ENCODE measurements at regions of chr12 and their contacts with region 1.

Region 1: DNA sequence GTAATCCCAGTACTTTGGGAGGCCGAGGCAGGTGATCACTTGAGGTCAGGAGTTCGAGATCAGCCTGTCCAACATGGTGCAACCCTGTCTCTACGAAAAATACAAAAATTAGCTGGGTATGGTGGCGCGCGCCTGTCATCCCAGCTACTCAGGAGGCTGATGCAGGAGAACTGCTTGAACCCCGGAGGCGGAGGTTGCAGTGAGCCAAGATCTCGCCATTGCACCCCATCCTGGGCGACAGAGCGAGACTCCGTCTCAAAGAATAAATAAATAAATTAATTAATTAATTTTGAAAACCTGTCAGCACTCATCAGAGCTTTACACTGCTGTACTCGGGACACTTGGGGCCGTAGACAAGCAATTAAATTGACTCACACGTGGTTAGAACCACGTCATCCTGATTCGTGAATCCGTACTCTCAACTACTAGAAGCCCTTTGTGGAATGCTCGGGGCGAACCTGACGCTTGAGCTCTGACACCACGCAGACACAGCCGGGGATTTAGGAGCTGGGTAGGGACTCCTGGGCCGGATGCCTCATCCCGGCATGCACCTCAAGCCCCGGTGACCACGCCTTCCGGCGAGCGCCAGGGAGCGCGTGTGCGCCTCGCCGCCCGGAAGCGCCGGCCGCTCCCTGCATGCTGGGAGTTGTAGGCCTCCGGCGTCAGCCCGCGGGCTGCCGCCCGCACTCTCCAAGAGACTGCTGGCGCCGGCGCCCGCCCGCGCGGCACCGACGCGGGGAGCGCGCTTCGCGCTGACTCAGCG is at the start of gene XPOT:
- DNase-seq: peak; percentile 91 to 95 (median 94)
- H3K4me3 ChIP-seq: peak within 1 kb of the TSS; percentile 78 to 86
- H3K4me3 Mint-ChIP-seq: peak within 1 kb of the TSS; percentile 90 to 98 (median 96)
- H3K27ac ChIP-seq: peak within 1 kb of the TSS; percentile 91
- H3K27ac Mint-ChIP-seq: peak within 1 kb of the TSS; percentile 94 to 98 (median 97)
- H3K4me1 ChIP-seq: peaks cover 33% of the 10 kb centered on the region
- H3K4me1 Mint-ChIP-seq: peaks cover 21 to 49% (median 37%) of the 10 kb centered on the region in 4 donors
- H3K27me3 ChIP-seq: no peaks in the 10 kb centered on the region
- H3K27me3 Mint-ChIP-seq: no peaks in the 10 kb centered on the region
- total RNA-seq, gene XPOT: 88.8 TPM

Region 2: DNA sequence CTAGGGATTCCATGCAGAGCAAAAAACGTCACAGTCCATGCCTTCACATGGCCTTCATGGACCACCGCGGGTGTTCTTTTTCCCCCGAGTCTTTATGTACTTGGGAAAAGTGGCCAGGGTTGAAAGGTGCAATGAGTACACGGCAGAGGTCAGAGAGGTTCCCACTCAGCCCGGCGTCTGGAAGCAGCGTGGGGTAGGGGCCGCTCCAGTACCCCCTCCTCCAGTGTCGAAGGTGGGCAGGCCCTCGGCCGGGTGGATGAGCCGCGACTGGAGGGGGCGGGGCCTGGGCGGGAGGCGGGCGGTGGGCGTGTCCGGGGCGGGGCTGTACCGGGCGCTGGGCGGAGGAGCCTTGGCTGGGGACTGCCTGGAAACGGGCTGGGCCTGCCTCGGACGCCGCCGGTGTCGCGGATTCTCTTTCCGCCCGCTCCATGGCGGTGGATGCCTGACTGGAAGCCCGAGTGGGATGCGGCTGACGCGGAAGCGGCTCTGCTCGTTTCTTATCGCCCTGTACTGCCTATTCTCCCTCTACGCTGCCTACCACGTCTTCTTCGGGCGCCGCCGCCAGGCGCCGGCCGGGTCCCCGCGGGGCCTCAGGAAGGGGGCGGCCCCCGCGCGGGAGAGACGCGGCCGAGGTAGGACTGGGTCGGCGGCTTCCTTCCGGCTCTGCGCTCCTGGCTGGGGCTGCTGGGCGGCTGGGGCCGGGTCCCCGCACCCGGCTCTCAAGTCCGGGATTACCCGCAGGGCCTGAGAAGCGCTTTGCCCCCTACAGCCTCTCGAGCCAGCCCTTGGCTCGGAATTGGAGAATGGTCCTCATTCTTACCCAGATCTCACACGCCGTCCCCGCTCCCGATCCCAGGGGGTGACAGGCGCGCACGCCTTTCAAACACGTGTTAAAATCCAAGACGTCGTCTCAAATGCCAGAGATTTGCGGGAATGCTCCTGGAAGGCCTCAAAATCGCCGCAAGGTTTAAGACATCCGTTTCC is 624.1 kb before region 1 on chr12 and contains the start of gene RXYLT1:
- CTCF ChIA-PET with region 1: no interaction called
- POLR2A ChIA-PET with region 1: no interaction called
- intact Hi-C with region 1: loop called (anchors 5 kb)
- DNase-seq: peak; percentile 74 to 86 (median 81)
- H3K4me3 ChIP-seq: peak within 1 kb of the TSS; percentile 38 to 96
- H3K4me3 Mint-ChIP-seq: peak within 1 kb of the TSS; percentile 93 to 99 (median 97)
- H3K27ac ChIP-seq: peak within 1 kb of the TSS; percentile 84
- H3K27ac Mint-ChIP-seq: peak within 1 kb of the TSS; percentile 91 to 98 (median 95)
- H3K4me1 ChIP-seq: peaks cover 19% of the 10 kb centered on the region
- H3K4me1 Mint-ChIP-seq: peaks cover 11 to 35% (median 16%) of the 10 kb centered on the region in 4 donors
- H3K27me3 ChIP-seq: no peaks in the 10 kb centered on the region
- H3K27me3 Mint-ChIP-seq: no peaks in the 10 kb centered on the region
- total RNA-seq, gene RXYLT1: 14.5 to 15.1 TPM

Region 3: DNA sequence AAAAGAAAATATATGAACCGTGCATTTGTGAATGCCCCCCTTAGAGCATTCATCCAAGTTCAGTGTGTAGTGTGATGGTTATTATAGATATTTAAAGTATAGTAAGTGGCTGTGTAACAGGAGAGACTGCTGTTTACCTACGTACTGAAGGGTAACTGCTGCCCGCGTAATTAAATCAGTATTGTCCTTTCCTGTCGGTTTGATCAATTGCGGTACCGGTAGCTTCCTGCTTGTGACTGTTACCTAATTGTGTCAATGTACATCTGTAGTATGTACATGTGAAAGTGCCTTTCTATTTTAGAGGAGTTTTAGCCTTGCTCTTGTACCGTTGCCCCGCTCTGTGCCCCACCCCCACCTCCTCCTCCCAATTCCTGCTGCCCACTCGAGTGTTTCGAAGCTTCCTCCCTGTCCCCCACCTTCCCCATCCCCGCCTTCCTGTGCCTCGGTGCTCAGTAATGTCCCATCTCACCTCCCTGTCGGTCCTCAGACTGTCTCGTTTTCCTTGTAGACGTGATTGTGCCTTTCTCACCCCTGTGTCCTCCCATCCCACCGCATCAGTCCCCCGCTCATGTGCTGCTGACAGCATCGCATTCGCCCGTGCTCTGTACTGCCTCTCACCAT is 256.8 kb before region 1 on chr12:
- CTCF ChIA-PET with region 1: no interaction called
- POLR2A ChIA-PET with region 1: no interaction called
- intact Hi-C with region 1: no loop called
- DNase-seq: no peak
- H3K4me3 ChIP-seq: no peak overlapping the region
- H3K4me3 Mint-ChIP-seq: peak overlapping the region in 7 of 8 donors; percentile 30 to 77 (median 55)
- H3K27ac ChIP-seq: no peak overlapping the region
- H3K27ac Mint-ChIP-seq: peak overlapping the region in 1 of 7 donors; percentile 79
- H3K4me1 ChIP-seq: no peaks in the 10 kb centered on the region
- H3K4me1 Mint-ChIP-seq: peaks cover 0 to 5% (median 3%) of the 10 kb centered on the region in 4 donors
- H3K27me3 ChIP-seq: no peaks in the 10 kb centered on the region
- H3K27me3 Mint-ChIP-seq: no peaks in the 10 kb centered on the region

Region 4: DNA sequence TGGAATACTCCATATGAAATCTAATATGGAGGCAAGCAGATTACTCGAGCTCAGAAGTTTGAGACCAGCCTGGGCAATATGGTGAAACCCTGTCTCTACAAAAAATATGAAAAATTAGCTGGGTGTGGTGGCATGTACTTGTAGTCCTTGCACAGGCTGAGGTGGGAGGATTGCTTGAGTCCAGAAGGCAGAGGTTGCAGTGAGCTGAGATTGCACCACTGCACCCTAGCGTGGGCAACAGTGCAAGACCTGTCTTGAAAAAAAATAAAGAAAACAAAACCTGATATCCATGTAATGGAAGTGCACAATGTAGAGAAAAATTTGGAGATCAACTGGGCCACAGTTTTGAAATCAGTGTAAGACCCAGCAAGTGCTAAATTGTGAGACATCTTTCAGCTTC is 30.7 kb before region 1 on chr12:
- CTCF ChIA-PET with region 1: no interaction called
- POLR2A ChIA-PET with region 1: no interaction called
- intact Hi-C with region 1: no loop called
- DNase-seq: no peak
- H3K4me3 ChIP-seq: no peak overlapping the region
- H3K4me3 Mint-ChIP-seq: no peak overlapping the region
- H3K27ac ChIP-seq: no peak overlapping the region
- H3K27ac Mint-ChIP-seq: no peak overlapping the region
- H3K4me1 ChIP-seq: no peaks in the 10 kb centered on the region
- H3K4me1 Mint-ChIP-seq: no peaks in the 10 kb centered on the region
- H3K27me3 ChIP-seq: no peaks in the 10 kb centered on the region
- H3K27me3 Mint-ChIP-seq: no peaks in the 10 kb centered on the region

Region 5: GRCh38 chr12:64451687-64452558 is 48.0 kb after region 1 on chr12 and contains the start of gene TBK1:
- CTCF ChIA-PET with region 1: no interaction called
- POLR2A ChIA-PET with region 1: interaction called, 9 read pairs
- intact Hi-C with region 1: loop called (anchors 2 kb)
- DNase-seq: peak; percentile 42 to 66 (median 50)
- H3K4me3 ChIP-seq: peak within 1 kb of the TSS; percentile 87 to 97
- H3K4me3 Mint-ChIP-seq: peak within 1 kb of the TSS; percentile 94 to 98 (median 96)
- H3K27ac ChIP-seq: peak within 1 kb of the TSS; percentile 92
- H3K27ac Mint-ChIP-seq: peak within 1 kb of the TSS; percentile 93 to 99 (median 97)
- H3K4me1 ChIP-seq: peaks cover 51% of the 10 kb centered on the region
- H3K4me1 Mint-ChIP-seq: peaks cover 33 to 59% (median 44%) of the 10 kb centered on the region in 4 donors
- H3K27me3 ChIP-seq: no peaks in the 10 kb centered on the region
- H3K27me3 Mint-ChIP-seq: no peaks in the 10 kb centered on the region
- total RNA-seq, gene TBK1: 23.8 to 25.0 TPM

Region 6: GRCh38 chr12:64759035-64759901 is 355.4 kb after region 1 on chr12 and contains the start of gene GNS:
- CTCF ChIA-PET with region 1: no interaction called
- POLR2A ChIA-PET with region 1: no interaction called
- intact Hi-C with region 1: loop called (anchors 1 kb)
- DNase-seq: peak; percentile 86 to 94 (median 89)
- H3K4me3 ChIP-seq: peak within 1 kb of the TSS; percentile 45 to 86
- H3K4me3 Mint-ChIP-seq: peak within 1 kb of the TSS; percentile 89 to 99 (median 98)
- H3K27ac ChIP-seq: peak within 1 kb of the TSS; percentile 74
- H3K27ac Mint-ChIP-seq: peak within 1 kb of the TSS; percentile 93 to 98 (median 96)
- H3K4me1 ChIP-seq: peaks cover 35% of the 10 kb centered on the region
- H3K4me1 Mint-ChIP-seq: peaks cover 27 to 52% (median 40%) of the 10 kb centered on the region in 4 donors
- H3K27me3 ChIP-seq: no peaks in the 10 kb centered on the region
- H3K27me3 Mint-ChIP-seq: no peaks in the 10 kb centered on the region
- total RNA-seq, gene GNS: 34.2 to 35.0 TPM